ENCODE measurements at regions of chr2 and their contacts with region 1.

Region 1: GRCh38 chr2:151437630-151438029 is 27.9 kb downstream of the RIF1 start:
- DNase-seq: no peak
- H3K4me3 ChIP-seq: no peak overlapping the region
- H3K27ac ChIP-seq: no peak overlapping the region
- H3K4me1 ChIP-seq: no peaks in the 10 kb centered on the region
- H3K27me3 ChIP-seq: no peaks in the 10 kb centered on the region
- CTCF ChIP-seq: peak in 1 of 3 experiments; percentile 13; a peak in 1 of 4 replicates
- EP300 ChIP-seq: no peak
- POLR2A ChIP-seq: no peak
- RAD21 ChIP-seq: no peak

Region 2: DNA sequence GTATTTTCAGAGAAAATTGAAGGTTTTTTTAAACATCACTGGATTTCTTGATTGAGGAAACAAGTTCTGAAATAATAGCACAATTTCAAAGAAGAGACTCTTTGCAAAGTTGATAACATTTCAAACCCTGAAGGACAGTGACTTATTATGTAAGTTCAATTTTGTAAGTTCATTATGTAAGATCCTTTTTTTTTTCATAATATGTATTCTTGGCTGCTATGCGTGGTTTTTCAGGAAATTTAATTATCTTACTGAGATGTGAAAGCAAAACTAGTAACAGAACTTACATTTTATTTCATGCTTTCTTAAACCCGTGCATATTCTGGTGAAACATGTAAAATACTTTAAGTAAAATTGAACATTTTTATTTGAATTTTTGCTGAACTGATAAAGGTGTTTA is 37.4 kb after region 1 on chr2:
- CTCF ChIA-PET with region 1: interaction called, 16 read pairs
- POLR2A ChIA-PET with region 1: interaction called, 3 read pairs
- DNase-seq: no peak
- H3K4me3 ChIP-seq: no peak overlapping the region
- H3K27ac ChIP-seq: no peak overlapping the region
- H3K4me1 ChIP-seq: no peaks in the 10 kb centered on the region
- H3K27me3 ChIP-seq: no peaks in the 10 kb centered on the region
- CTCF ChIP-seq: no peak
- EP300 ChIP-seq: no peak
- POLR2A ChIP-seq: no peak
- RAD21 ChIP-seq: no peak

Region 3: GRCh38 chr2:151760139-151760650 is 322.6 kb after region 1 on chr2:
- CTCF ChIA-PET with region 1: no interaction called
- POLR2A ChIA-PET with region 1: no interaction called
- DNase-seq: peak in 1 of 2 experiments; percentile 7
- H3K4me3 ChIP-seq: no peak overlapping the region
- H3K27ac ChIP-seq: no peak overlapping the region
- H3K4me1 ChIP-seq: no peaks in the 10 kb centered on the region
- H3K27me3 ChIP-seq: no peaks in the 10 kb centered on the region
- CTCF ChIP-seq: no peak
- EP300 ChIP-seq: no peak
- POLR2A ChIP-seq: no peak
- RAD21 ChIP-seq: no peak